Colonic mucosa (tissue), 4 donors: ENCODE measurements at regions of chr10 and their contacts with region 1.

Region 1: GRCh38 chr10:89029785-89030437 is 39.3 kb downstream of the FAS start:
- DNase-seq: peak; percentile 74
- H3K4me3 ChIP-seq: no peak overlapping the region
- H3K27ac ChIP-seq: no peak overlapping the region
- H3K4me1 ChIP-seq: peaks cover 4% of the 10 kb centered on the region
- H3K27me3 ChIP-seq: no peaks in the 10 kb centered on the region
- CTCF ChIP-seq: peak; percentile 89

Region 2: GRCh38 chr10:89207801-89208551 is 178.1 kb after region 1 on chr10:
- intact Hi-C with region 1: loop called (anchors 2 kb)
- DNase-seq: peak; percentile 31
- H3K4me3 ChIP-seq: peak overlapping the region; percentile 38
- H3K27ac ChIP-seq: peak overlapping the region; percentile 45
- H3K4me1 ChIP-seq: no peaks in the 10 kb centered on the region
- H3K27me3 ChIP-seq: peaks cover 29% of the 10 kb centered on the region
- CTCF ChIP-seq: no peak